ENCODE measurements at regions of chr9 and their contacts with region 1.

Region 1: GRCh38 chr9:18473652-18474279 is at the start of gene ADAMTSL1:
- DNase-seq: peak; percentile 83
- H3K4me3 ChIP-seq: peak within 1 kb of the TSS; percentile 73
- H3K27ac ChIP-seq: peak within 1 kb of the TSS; percentile 40
- H3K27me3 ChIP-seq: no peaks in the 10 kb centered on the region
- CTCF ChIP-seq: no peak

Region 2: DNA sequence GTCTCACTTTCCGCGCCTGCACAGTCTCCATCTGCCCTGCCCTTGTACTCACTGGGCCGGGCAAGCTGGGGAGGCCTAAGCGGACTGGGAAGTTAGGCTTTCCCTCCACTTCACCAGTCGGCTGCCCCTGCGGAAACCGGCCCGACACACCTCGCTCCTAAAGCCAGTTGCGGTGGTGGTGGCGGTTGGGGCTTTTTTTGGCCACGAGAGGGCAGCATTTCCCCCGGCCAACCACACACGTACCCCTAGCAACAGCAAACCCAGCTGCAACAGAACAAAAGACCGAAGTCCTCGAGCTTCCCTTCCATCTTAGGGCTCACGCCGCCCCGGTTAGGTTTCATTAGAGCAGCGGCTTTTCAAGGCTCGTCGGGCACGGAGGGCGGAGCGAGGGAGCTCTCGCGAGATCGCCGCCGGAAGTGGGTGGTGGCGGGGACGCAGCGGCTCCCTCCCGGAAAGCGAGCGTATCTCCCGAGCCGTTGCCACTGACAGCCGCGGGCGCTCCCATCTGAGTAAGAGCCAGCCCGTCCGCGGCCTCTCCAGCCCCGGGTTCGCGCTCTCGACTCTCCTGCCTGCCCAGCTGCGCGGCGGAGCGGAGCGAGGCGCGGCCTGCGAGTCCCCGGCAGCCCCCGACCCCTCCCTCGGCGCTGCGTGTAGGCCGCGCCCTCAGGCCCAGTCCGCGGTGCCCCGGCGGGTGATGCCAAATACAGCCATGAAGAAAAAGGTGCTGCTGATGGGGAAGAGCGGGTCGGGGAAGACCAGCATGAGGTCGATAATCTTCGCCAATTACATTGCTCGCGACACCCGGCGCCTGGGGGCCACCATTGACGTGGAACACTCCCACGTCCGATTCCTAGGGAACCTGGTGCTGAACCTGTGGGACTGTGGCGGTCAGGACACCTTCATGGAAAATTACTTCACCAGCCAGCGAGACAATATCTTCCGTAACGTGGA is 575.5 kb after region 1 on chr9 and contains the start of gene RRAGA:
- in situ Hi-C with region 1: loop called (anchors 25 kb)
- DNase-seq: peak; percentile 96
- H3K4me3 ChIP-seq: peak within 1 kb of the TSS; percentile 92
- H3K27ac ChIP-seq: peak within 1 kb of the TSS; percentile 73
- H3K27me3 ChIP-seq: no peaks in the 10 kb centered on the region
- CTCF ChIP-seq: peak; percentile 89